ENCODE measurements at regions of chr15 and their contacts with region 1.

Region 1: GRCh38 chr15:74776821-74777768 is 4.8 kb upstream of the CSK start:
- DNase-seq: peak; percentile 66
- ATAC-seq: peak; percentile 39
- H3K4me3 ChIP-seq: no peak overlapping the region
- H3K27ac ChIP-seq: peak overlapping the region; percentile 64
- H3K4me1 ChIP-seq: peaks cover 34% of the 10 kb centered on the region
- H3K27me3 ChIP-seq: no peaks in the 10 kb centered on the region
- CTCF ChIP-seq: no peak

Region 2: GRCh38 chr15:74545880-74546656 is 231.0 kb before region 1 on chr15:
- intact Hi-C with region 1: no loop called
- DNase-seq: peak; percentile 97
- ATAC-seq: peak; percentile 90
- H3K4me3 ChIP-seq: no peak overlapping the region
- H3K27ac ChIP-seq: no peak overlapping the region
- H3K4me1 ChIP-seq: peaks cover 49% of the 10 kb centered on the region
- H3K27me3 ChIP-seq: no peaks in the 10 kb centered on the region
- CTCF ChIP-seq: no peak

Region 3: GRCh38 chr15:74599156-74599555 is 177.9 kb before region 1 on chr15:
- intact Hi-C with region 1: no loop called
- DNase-seq: no peak
- ATAC-seq: no peak
- H3K4me3 ChIP-seq: peak overlapping the region; percentile 87
- H3K27ac ChIP-seq: peak overlapping the region; percentile 86
- H3K4me1 ChIP-seq: peaks cover 16% of the 10 kb centered on the region
- H3K27me3 ChIP-seq: no peaks in the 10 kb centered on the region
- CTCF ChIP-seq: no peak

Region 4: GRCh38 chr15:74610302-74610951 is 166.7 kb before region 1 on chr15:
- intact Hi-C with region 1: no loop called
- DNase-seq: no peak
- ATAC-seq: no peak
- H3K4me3 ChIP-seq: no peak overlapping the region
- H3K27ac ChIP-seq: no peak overlapping the region
- H3K4me1 ChIP-seq: no peaks in the 10 kb centered on the region
- H3K27me3 ChIP-seq: no peaks in the 10 kb centered on the region
- CTCF ChIP-seq: no peak

Region 5: GRCh38 chr15:74948795-74949194 is 171.7 kb after region 1 on chr15:
- intact Hi-C with region 1: loop called (anchors 10 kb)
- DNase-seq: no peak
- ATAC-seq: no peak
- H3K4me3 ChIP-seq: no peak overlapping the region
- H3K27ac ChIP-seq: no peak overlapping the region
- H3K4me1 ChIP-seq: peaks cover 5% of the 10 kb centered on the region
- H3K27me3 ChIP-seq: no peaks in the 10 kb centered on the region
- CTCF ChIP-seq: no peak

Measured in upper lobe of right lung (tissue), 1 donor.